ENCODE measurements at regions of chr1 and their contacts with region 1.

Region 1: DNA sequence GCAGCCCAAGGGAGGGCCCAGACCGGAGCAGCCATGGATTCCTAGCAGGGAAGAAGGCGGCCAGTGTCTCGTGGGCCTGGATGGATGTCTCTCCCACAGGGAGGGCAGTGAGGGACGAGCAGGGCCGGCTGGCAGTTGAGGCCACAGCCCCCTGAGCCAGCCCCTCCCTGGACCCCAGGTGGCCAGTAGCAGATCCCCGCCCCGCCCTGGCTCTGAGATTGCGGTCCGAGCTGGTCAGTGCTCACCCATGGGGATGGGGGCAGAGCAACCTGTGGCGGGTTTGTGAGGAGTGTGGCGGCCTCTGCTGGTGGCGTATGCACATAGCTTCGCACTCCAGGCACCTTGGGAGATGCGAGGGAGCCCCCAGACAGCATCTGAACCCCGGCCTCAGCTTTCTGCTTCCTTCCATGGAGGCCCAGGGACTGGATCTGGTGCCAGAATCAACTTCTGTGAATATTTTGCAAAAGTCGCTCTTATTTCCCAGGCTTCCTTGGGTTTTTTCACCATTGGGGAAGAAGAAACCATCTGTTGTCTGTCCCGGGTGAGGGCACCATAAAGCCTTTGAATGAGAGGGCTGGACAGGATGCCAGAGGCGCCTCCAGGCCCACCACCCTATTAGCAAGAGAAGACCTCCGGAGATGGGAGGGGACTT is 8.4 kb upstream of the KCNN3 start:
- DNase-seq: peak; percentile 80 to 81
- ATAC-seq: peak; percentile 92 to 97 (median 96)
- H3K4me3 ChIP-seq: no peak overlapping the region
- H3K27ac ChIP-seq: no peak overlapping the region
- H3K4me1 ChIP-seq: peaks cover 0 to 7% (median 3%) of the 10 kb centered on the region in 9 donors
- H3K27me3 ChIP-seq: no peaks in the 10 kb centered on the region
- CTCF ChIP-seq: peak; percentile 82 to 92 (median 90)

Region 2: DNA sequence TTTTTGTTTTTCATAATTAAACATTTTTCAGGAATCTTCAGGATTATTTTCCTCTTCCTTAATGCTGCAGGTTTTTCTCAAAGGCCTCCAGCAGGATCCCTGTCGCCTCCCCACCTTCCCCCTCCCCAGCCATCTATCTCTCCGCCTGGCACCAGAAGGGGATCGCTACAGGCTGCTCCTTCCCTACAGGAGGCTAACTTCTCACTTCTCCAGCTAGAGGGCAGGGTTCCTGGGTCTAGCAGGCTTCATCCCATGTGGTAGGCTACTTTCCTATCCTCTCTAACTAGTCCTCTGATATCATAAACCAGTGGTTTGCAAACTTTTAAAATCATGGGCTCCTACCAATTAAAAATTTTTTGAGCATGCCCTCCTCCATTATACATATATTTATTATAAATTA is 112.5 kb before region 1 on chr1:
- intact Hi-C with region 1: loop called in 4 of 10 experiments (anchors 5 kb)
- DNase-seq: no peak
- ATAC-seq: peak in 2 of 8 donors; percentile 34 to 45
- H3K4me3 ChIP-seq: no peak overlapping the region
- H3K27ac ChIP-seq: no peak overlapping the region
- H3K4me1 ChIP-seq: peaks cover 4 to 26% (median 15%) of the 10 kb centered on the region in 9 donors
- H3K27me3 ChIP-seq: peaks cover 0 to 39% (median 3%) of the 10 kb centered on the region in 7 donors
- CTCF ChIP-seq: peak in 7 of 9 donors; percentile 23 to 50 (median 37)

Region 3: DNA sequence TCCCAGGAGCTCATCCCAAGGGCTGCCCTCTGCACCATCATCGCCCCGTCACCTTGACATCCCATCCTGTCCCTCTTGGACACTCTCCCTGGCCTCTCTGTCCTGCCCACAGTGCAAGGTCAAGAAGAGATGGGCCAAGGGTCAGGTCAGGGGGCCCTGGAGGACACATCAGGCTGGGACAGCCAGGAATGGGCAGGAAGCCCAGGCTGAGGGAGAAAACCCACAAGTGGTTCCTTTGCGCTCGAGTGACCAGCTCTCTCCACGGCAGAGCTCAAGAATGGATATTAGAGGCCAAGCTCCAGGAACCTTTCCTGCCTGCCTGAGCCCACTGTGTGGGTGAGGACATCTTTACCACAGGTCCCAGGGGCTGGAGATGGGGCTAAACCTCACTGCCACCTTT is 49.4 kb before region 1 on chr1:
- intact Hi-C with region 1: loop called in 1 of 10 experiments (anchors 5 kb)
- DNase-seq: no peak
- ATAC-seq: no peak
- H3K4me3 ChIP-seq: no peak overlapping the region
- H3K27ac ChIP-seq: no peak overlapping the region
- H3K4me1 ChIP-seq: peaks cover 14 to 38% (median 26%) of the 10 kb centered on the region in 9 donors
- H3K27me3 ChIP-seq: no peaks in the 10 kb centered on the region
- CTCF ChIP-seq: no peak

Measured in heart right ventricle (tissue), 16 donors.